Activated T-helper 2 cell treated with anti-CD3 and anti-CD28 coated beads, Interferon-gamma antibody, Interleukin-2, Interleukin-4, amounts not matched to agents 10 μg/mL and 5 μg/mL and 100 μg/mL, durations not matched to agents 14 hours and 24 hours and 36 hours (primary cell): ENCODE measurements at regions of chr1 and their contacts with region 1.

Region 1: DNA sequence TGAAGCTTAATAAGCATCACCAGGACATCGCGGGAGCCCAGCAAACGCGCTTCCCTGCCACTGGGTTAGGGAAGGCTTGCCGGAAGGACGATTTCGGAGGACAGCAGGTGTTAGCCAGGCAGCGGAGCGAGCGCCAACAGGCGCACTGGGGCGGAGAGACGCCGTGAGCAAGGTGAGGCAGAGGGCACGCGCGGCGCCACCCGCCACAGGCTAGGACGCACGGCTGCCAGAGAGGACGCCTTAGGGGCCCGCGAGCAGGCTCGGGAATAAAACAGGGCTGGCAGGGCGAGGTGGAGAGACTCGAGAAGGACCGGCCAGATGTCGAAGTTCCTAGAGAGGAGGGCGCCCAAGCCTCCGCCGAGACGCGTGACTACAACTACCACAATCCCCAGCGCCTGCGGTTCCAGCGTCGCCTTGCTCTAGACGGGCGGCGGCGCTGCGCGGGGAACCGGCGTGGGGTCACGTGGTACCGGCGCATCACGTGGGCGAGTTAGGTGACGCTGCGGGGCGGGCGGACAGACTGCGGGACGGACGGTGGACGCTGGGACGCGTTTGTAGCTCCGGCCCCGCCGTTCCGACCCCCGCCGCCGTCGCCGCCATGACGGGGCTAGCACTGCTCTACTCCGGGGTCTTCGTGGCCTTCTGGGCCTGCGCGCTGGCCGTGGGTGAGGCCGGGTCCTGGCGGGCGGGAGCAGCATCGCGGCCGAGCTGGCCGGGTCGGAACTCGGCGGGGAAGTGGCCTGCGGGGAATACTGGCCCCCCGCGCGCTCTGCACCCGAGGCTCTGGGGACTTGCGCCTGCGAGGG is at the start of gene ATP6V0B:
- DNase-seq: peak; percentile 94
- H3K4me3 Mint-ChIP-seq: peak within 1 kb of the TSS; percentile 91
- H3K27ac Mint-ChIP-seq: peak within 1 kb of the TSS; percentile 90
- H3K4me1 Mint-ChIP-seq: peaks cover 49% of the 10 kb centered on the region
- H3K27me3 Mint-ChIP-seq: no peaks in the 10 kb centered on the region
- total RNA-seq, gene ATP6V0B: 156 and 160 TPM in 2 replicates

Region 2: GRCh38 chr1:43706598-43707495 is 267.8 kb before region 1 on chr1:
- intact Hi-C with region 1: loop called (anchors 1 kb)
- DNase-seq: peak; percentile 90
- H3K4me3 Mint-ChIP-seq: peak overlapping the region; percentile 85
- H3K27ac Mint-ChIP-seq: peak overlapping the region; percentile 75
- H3K4me1 Mint-ChIP-seq: peaks cover 44% of the 10 kb centered on the region
- H3K27me3 Mint-ChIP-seq: no peaks in the 10 kb centered on the region

Region 3: GRCh38 chr1:43991476-43992231 is 17.0 kb after region 1 on chr1 and contains the start of gene CCDC24:
- intact Hi-C with region 1: loop called (anchors 2 kb)
- DNase-seq: peak; percentile 71
- H3K4me3 Mint-ChIP-seq: peak within 1 kb of the TSS; percentile 92
- H3K27ac Mint-ChIP-seq: peak within 1 kb of the TSS; percentile 22
- H3K4me1 Mint-ChIP-seq: peaks cover 8% of the 10 kb centered on the region
- H3K27me3 Mint-ChIP-seq: peaks cover 3% of the 10 kb centered on the region
- total RNA-seq, gene CCDC24: 2.1 and 2.3 TPM in 2 replicates

Region 4: DNA sequence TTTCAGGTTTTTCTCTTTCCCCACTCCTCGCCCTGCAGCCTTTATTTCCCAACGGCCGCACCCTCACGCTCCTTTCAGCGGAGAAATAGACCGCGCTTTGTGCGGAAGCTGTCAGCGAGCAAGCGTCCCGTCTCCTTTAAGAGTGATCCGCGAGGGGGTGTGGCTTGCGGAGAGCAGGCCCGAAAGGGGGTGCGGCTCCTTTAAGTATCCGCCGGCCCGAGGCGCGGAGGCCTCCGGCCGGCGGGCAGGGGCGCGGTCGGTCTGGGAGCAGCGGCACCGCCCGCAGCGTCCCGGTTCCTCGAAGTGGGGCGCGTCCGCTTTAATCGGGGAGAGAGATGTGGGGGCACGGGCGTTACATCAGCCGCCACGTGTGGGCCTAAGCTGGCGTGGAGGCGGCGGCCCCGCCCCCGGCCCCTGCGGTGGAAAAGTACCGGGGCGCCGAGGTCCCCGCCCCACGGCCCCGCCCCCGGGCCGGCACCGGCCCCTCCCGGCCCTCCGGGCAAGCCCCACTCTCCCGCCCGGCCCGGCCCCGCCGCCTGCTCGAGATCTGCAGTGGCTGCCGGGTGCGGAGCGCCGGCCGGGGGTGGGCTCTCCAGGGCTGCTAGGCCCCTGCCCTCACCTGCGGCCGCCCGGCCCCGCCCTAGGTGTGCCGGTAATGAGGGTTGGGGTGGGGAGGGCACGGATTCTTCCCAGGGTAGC is 55.4 kb after region 1 on chr1:
- intact Hi-C with region 1: loop called (anchors 2 kb)
- DNase-seq: peak; percentile 86
- H3K4me3 Mint-ChIP-seq: peak overlapping the region; percentile 90
- H3K27ac Mint-ChIP-seq: peak overlapping the region; percentile 90
- H3K4me1 Mint-ChIP-seq: peaks cover 29% of the 10 kb centered on the region
- H3K27me3 Mint-ChIP-seq: no peaks in the 10 kb centered on the region